OCI-LY7 (cell line): ENCODE measurements at regions of chr18 and their contacts with region 1.

Region 1: GRCh38 chr18:3281456-3282400 is 19.8 kb downstream of the MYL12B start:
- DNase-seq: peak; percentile 91
- H3K4me3 ChIP-seq: no peak overlapping the region
- H3K27ac ChIP-seq: peak overlapping the region; percentile 99
- H3K4me1 ChIP-seq: peaks cover 54% of the 10 kb centered on the region
- CTCF ChIP-seq: peak; percentile 91

Region 2: GRCh38 chr18:3261371-3262246 is 20.1 kb before region 1 on chr18 and contains the start of gene MYL12B:
- CTCF ChIA-PET with region 1: interaction called, 3 read pairs
- POLR2A ChIA-PET with region 1: interaction called, 45 read pairs
- intact Hi-C with region 1: loop called (anchors 1 kb)
- DNase-seq: peak; percentile 88
- H3K4me3 ChIP-seq: peak within 1 kb of the TSS; percentile 86
- H3K27ac ChIP-seq: peak within 1 kb of the TSS; percentile 81
- H3K4me1 ChIP-seq: peaks cover 62% of the 10 kb centered on the region
- CTCF ChIP-seq: no peak
- total RNA-seq, gene MYL12B: 240 and 260 TPM in 2 replicates

Region 3: GRCh38 chr18:3447895-3448837 is 166.4 kb after region 1 on chr18:
- CTCF ChIA-PET with region 1: no interaction called
- POLR2A ChIA-PET with region 1: interaction called, 6 read pairs
- intact Hi-C with region 1: loop called (anchors 1 kb)
- DNase-seq: peak; percentile 88
- H3K4me3 ChIP-seq: peak overlapping the region; percentile 88
- H3K27ac ChIP-seq: peak overlapping the region; percentile 96
- H3K4me1 ChIP-seq: peaks cover 22% of the 10 kb centered on the region
- CTCF ChIP-seq: no peak

Region 4: GRCh38 chr18:3593904-3594661 is 312.4 kb after region 1 on chr18:
- CTCF ChIA-PET with region 1: no interaction called
- POLR2A ChIA-PET with region 1: interaction called, 9 read pairs
- intact Hi-C with region 1: loop called (anchors 2 kb)
- DNase-seq: peak; percentile 97
- H3K4me3 ChIP-seq: peak overlapping the region; percentile 79
- H3K27ac ChIP-seq: peak overlapping the region; percentile 95
- H3K4me1 ChIP-seq: peaks cover 80% of the 10 kb centered on the region
- CTCF ChIP-seq: peak; percentile 79

Region 5: DNA sequence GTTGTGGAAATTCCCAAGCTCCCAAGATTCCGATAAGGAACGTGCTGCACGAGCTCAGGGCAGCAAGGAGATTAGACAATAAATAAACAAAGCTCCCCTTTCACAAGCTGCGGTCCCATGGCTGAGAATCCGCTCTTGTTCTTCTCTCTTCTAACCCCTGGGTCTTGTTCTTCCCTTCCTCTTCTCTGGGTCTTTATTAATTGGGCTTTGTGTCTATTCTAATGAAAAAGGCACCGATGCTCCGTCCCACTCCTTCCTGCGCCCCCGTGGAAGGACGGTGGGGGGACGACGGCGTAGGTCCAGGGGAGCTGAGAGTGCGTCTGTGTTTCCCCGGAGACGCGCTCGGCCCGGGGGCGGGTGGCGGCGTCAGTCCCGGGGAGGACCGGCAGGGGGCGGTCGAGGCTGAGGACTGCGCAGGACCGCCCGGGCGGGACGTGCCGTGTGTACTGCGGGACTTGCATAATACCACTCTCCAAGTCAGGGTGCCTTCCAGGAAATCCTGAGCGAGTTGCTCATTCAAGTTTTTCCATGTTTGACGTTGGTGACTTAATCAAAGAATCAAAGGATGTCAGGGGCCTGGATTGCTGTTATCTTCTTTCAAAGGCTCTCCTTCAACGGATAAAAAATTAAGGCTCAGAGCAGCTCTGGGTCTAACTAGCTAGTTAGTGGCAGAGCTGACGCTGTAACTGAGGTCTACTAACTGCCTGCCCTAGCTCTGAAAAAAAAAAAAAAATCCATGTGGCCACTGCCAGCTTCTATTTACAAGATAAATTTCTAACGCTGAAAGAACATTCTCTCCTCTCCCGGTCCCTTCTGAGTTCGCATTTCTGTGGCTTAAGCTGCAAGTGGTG is 489.6 kb after region 1 on chr18:
- CTCF ChIA-PET with region 1: no interaction called
- POLR2A ChIA-PET with region 1: interaction called, 5 read pairs
- intact Hi-C with region 1: loop called (anchors 2 kb)
- DNase-seq: peak; percentile 86
- H3K4me3 ChIP-seq: peak overlapping the region; percentile 60
- H3K27ac ChIP-seq: no peak overlapping the region
- H3K4me1 ChIP-seq: peaks cover 24% of the 10 kb centered on the region
- CTCF ChIP-seq: peak; percentile 96

Region 6: DNA sequence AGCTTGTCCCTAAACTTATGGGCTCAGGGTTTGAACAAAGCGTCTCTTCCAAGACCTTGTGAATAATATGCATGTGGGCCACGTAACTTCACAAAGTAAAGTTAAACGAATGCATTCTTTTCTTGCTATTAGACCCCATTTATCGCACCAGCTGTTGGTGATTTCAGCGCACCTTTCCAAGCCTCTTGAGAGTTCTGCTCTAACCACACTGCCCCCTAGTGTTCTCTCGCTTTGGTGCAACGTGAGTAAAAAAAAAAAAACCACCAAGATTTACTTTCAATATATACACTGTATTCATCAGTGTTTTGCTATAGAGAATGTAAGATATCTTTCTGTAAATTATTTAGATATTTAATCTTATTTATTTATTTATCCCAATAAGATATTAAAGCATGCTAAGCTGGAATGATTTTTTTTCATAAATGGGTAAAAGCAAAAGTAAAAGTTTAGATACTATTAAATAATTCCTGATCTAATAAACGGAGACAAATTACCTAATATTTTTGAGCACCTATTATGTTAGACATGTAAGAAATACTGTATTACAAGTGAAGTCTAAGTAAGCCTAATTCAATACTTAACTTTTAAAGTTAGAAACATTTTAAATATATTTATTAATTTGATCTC is 713.9 kb after region 1 on chr18:
- CTCF ChIA-PET with region 1: no interaction called
- POLR2A ChIA-PET with region 1: no interaction called
- intact Hi-C with region 1: loop called (anchors 5 kb)
- DNase-seq: peak; percentile 85
- H3K4me3 ChIP-seq: no peak overlapping the region
- H3K27ac ChIP-seq: no peak overlapping the region
- H3K4me1 ChIP-seq: peaks cover 5% of the 10 kb centered on the region
- CTCF ChIP-seq: peak; percentile 97